Heart left ventricle (tissue), 16 donors: ENCODE measurements at regions of chr22 and their contacts with region 1.

Region 1: GRCh38 chr22:39532215-39533071 is at the start of gene RPS19BP1:
- DNase-seq: peak; percentile 98 to 100 (median 99)
- ATAC-seq: peak; percentile 87 to 92 (median 88)
- H3K4me3 ChIP-seq: peak within 1 kb of the TSS; percentile 53 to 96 (median 85)
- H3K27ac ChIP-seq: peak within 1 kb of the TSS; percentile 66 to 97 (median 92)
- H3K4me1 ChIP-seq: peaks cover 7 to 56% (median 43%) of the 10 kb centered on the region in 12 donors
- H3K27me3 ChIP-seq: no peaks in the 10 kb centered on the region
- CTCF ChIP-seq: no peak
- POLR2A ChIP-seq: peak in 1 of 2 donors; percentile 89
- total RNA-seq, gene RPS19BP1: 33.2 to 108 (median 44.5) TPM

Region 2: DNA sequence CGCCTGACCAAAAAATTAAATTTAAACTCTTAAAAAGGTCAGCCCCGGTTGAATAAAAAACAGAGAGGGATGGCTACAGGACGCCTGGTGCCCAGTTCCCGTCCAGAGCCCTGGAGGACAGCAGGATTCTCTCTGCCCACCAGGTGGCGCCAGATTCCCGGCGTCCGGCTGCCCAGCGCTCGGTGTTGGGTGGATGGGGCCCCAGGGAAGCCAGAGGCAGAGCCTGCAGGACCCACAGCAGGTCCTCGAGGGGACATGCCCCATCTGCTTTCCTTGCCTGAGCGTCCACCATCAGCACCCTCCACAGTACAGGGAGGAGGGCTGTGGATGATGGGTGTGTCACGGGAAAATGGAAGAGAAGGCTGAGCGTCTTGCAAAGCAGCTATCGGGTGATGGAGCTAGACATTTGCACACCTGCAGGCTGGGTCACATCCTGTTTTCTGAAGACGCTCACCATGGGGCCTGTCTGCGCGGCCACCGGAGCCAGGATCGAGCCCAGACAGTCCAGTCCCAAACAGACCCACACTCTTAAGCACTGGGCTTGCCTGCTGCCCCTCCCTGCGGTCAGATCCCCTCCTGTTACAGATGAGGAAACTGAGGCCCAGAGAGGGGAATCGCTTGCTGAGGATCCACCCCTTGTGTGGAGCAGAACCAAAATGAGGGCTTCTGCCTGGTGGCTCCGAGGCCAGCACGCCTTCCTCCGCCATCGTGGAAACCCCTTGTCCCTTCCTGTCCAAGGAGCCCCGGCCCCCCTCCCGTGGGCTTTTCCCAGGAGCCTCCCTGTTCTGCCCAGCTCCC is 361.4 kb before region 1 on chr22:
- intact Hi-C with region 1: loop called in 9 of 10 experiments (anchors 5 to 10 kb)
- DNase-seq: peak; percentile 81 to 93 (median 84)
- ATAC-seq: peak; percentile 76 to 87 (median 83)
- H3K4me3 ChIP-seq: peak overlapping the region in 4 of 12 donors; percentile 1 to 18 (median 10)
- H3K27ac ChIP-seq: peak overlapping the region in 3 of 12 donors; percentile 25 to 42 (median 40)
- H3K4me1 ChIP-seq: peaks cover 33 to 56% (median 47%) of the 10 kb centered on the region in 12 donors
- H3K27me3 ChIP-seq: no peaks in the 10 kb centered on the region
- CTCF ChIP-seq: peak; percentile 94 to 99 (median 96)
- POLR2A ChIP-seq: no peak

Region 3: GRCh38 chr22:39349506-39349966 is 182.9 kb before region 1 on chr22:
- intact Hi-C with region 1: loop called in 5 of 10 experiments (anchors 5 to 10 kb)
- DNase-seq: peak in 3 of 5 donors; percentile 50 to 59 (median 54)
- ATAC-seq: peak; percentile 38 to 69 (median 57)
- H3K4me3 ChIP-seq: peak overlapping the region; percentile 59 to 97 (median 74)
- H3K27ac ChIP-seq: peak overlapping the region in 11 of 12 donors; percentile 46 to 85 (median 69)
- H3K4me1 ChIP-seq: peaks cover 0 to 22% (median 10%) of the 10 kb centered on the region in 12 donors
- H3K27me3 ChIP-seq: peaks cover 0 to under 1% (median 0%) of the 10 kb centered on the region in 9 donors
- CTCF ChIP-seq: no peak
- POLR2A ChIP-seq: no peak

Region 4: GRCh38 chr22:39496131-39496838 is 36.2 kb before region 1 on chr22:
- intact Hi-C with region 1: loop called in 8 of 10 experiments (anchors 2 to 5 kb)
- DNase-seq: peak; percentile 77 to 88 (median 82)
- ATAC-seq: peak in 3 of 4 donors; percentile 72 to 77 (median 74)
- H3K4me3 ChIP-seq: no peak overlapping the region
- H3K27ac ChIP-seq: peak overlapping the region in 6 of 12 donors; percentile 21 to 47 (median 28)
- H3K4me1 ChIP-seq: peaks cover 5 to 59% (median 26%) of the 10 kb centered on the region in 12 donors
- H3K27me3 ChIP-seq: no peaks in the 10 kb centered on the region
- CTCF ChIP-seq: peak; percentile 66 to 88 (median 78)
- POLR2A ChIP-seq: no peak

Region 5: GRCh38 chr22:40036591-40037225 is 504.3 kb after region 1 on chr22:
- intact Hi-C with region 1: loop called in 5 of 10 experiments (anchors 5 kb)
- DNase-seq: peak in 4 of 5 donors; percentile 37 to 69 (median 52)
- ATAC-seq: peak; percentile 74 to 82 (median 77)
- H3K4me3 ChIP-seq: no peak overlapping the region
- H3K27ac ChIP-seq: no peak overlapping the region
- H3K4me1 ChIP-seq: peaks cover 0 to 21% (median 10%) of the 10 kb centered on the region in 12 donors
- H3K27me3 ChIP-seq: peaks cover 0 to 12% (median 5%) of the 10 kb centered on the region in 9 donors
- CTCF ChIP-seq: peak; percentile 53 to 77 (median 64)
- POLR2A ChIP-seq: no peak

Region 6: GRCh38 chr22:40636380-40637182 is 1104.1 kb after region 1 on chr22 and contains the start of gene MRTFA:
- intact Hi-C with region 1: loop called in 1 of 10 experiments (anchors 5 kb)
- DNase-seq: peak; percentile 100
- ATAC-seq: peak; percentile 96 to 98 (median 98)
- H3K4me3 ChIP-seq: peak within 1 kb of the TSS; percentile 73 to 99 (median 92)
- H3K27ac ChIP-seq: peak within 1 kb of the TSS; percentile 75 to 95 (median 92)
- H3K4me1 ChIP-seq: peaks cover 0 to 50% (median 26%) of the 10 kb centered on the region in 12 donors
- H3K27me3 ChIP-seq: no peaks in the 10 kb centered on the region
- CTCF ChIP-seq: peak in 2 of 12 donors; percentile 6 to 15
- POLR2A ChIP-seq: peak; percentile 80 to 96
- total RNA-seq, gene MRTFA: 14.0 to 52.6 (median 28.4) TPM